ENCODE measurements at regions of chr12 and their contacts with region 1.

Region 1: DNA sequence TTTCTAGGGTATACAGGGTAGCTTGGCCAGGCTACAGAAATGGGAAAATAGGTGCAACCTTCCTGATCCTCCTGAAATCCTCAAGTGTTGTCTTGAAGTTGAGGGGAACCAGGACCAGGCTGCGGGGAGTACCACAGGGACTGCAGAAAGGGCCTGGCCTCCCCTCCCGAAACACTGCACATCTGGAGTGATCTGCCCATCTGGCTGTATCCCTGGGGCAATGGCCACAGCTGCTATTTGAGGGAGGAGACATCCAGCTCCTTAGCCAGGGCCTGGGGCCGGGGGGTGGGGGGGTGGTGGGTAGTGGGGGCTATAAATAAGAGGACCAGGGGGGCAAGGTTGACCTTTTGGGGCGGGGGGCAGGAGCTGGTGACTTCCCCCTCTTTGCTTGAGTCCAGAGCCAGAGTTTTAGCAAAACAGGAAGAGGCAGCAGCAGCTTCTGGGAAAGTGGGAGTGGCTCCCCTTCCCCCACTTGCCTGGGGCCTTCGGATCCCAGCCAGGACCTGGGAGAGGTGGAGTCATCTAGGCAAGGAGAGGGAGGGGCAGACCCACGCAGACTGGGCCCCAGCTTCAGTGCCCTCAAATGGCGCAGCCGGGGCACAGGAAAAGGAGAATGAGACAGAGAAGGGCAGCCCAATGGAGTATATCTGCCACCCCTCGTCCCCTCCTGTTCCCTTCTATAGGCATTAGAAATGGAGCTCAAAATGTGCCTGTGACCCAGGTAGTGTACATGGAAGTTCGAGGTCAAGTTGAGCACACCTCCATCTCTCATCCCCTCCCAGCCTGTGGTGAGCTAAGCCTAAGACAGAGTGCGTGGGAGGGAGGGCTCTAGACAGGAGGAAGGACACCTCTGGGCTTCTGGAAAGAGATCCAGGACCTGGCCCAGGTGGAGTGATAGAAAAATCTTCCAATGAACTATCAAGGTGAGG is 9.2 kb upstream of the HDAC7 start:
- DNase-seq: no peak
- H3K4me3 ChIP-seq: no peak overlapping the region
- H3K27me3 ChIP-seq: no peaks in the 10 kb centered on the region
- CTCF ChIP-seq: no peak

Region 2: GRCh38 chr12:47715393-47715876 is 113.4 kb before region 1 on chr12:
- CTCF ChIA-PET with region 1: interaction called, 49 read pairs
- POLR2A ChIA-PET with region 1: no interaction called
- DNase-seq: no peak
- H3K4me3 ChIP-seq: no peak overlapping the region
- H3K27me3 ChIP-seq: no peaks in the 10 kb centered on the region
- CTCF ChIP-seq: peak; percentile 80

Region 3: GRCh38 chr12:47789712-47790489 is 39.0 kb before region 1 on chr12:
- CTCF ChIA-PET with region 1: no interaction called
- POLR2A ChIA-PET with region 1: no interaction called
- DNase-seq: no peak
- H3K4me3 ChIP-seq: no peak overlapping the region
- H3K27me3 ChIP-seq: no peaks in the 10 kb centered on the region
- CTCF ChIP-seq: no peak

Region 4: GRCh38 chr12:47812797-47813510 is 15.9 kb before region 1 on chr12:
- CTCF ChIA-PET with region 1: interaction called, 174 read pairs
- POLR2A ChIA-PET with region 1: no interaction called
- DNase-seq: peak; percentile 59
- H3K4me3 ChIP-seq: peak overlapping the region; percentile 18
- H3K27me3 ChIP-seq: no peaks in the 10 kb centered on the region
- CTCF ChIP-seq: no peak